ENCODE measurements at regions of chr17 and their contacts with region 1.

Region 1: GRCh38 chr17:44218344-44219107 is 949 bp downstream of the UBTF start:
- DNase-seq: peak; percentile 94
- ATAC-seq: peak; percentile 66

Region 2: GRCh38 chr17:44308320-44308818 is 89.8 kb after region 1 on chr17 and contains the start of gene RUNDC3A:
- intact Hi-C with region 1: no loop called
- DNase-seq: peak; percentile 92
- ATAC-seq: peak; percentile 99
- total RNA-seq, gene RUNDC3A: 0.45 TPM

Region 3: GRCh38 chr17:44324571-44325275 is 106.2 kb after region 1 on chr17 and contains the start of gene SLC25A39:
- intact Hi-C with region 1: loop called (anchors 5 kb)
- DNase-seq: peak; percentile 98
- ATAC-seq: peak; percentile 91
- total RNA-seq, gene SLC25A39: 52.3 TPM